ENCODE measurements at regions of chr19 and their contacts with region 1.

Region 1: GRCh38 chr19:5864725-5865486 is 5.4 kb downstream of the FUT5 start:
- DNase-seq: no peak
- H3K4me3 ChIP-seq: no peak overlapping the region
- H3K27ac ChIP-seq: no peak overlapping the region
- H3K4me1 ChIP-seq: no peaks in the 10 kb centered on the region
- H3K27me3 ChIP-seq: peaks cover 0 to 11% (median 0%) of the 10 kb centered on the region in 3 donors
- CTCF ChIP-seq: peak in 2 of 7 experiments; percentile 7 to 13
- EP300 ChIP-seq: no peak
- POLR2A ChIP-seq: no peak

Region 2: DNA sequence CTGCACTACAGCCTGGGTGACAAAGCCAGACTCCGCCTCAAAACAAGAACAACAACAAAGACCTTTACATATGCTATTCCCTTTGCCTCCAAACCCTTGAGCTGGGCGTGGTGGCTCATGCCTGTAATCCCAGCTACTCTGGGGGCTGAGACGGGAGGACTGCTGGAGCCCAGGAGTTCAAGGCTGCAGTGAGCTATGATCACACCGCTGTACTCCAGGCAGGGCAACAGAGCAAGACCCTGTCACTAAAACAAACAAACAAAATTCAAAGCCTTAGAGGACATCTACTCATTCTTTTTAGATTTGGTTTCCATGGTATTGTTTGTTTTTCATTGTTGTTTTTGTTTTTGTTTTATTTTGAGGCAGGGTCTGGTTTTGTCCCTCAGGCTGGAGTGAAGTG is 460.7 kb after region 1 on chr19:
- intact Hi-C with region 1: loop called (anchors 10 kb)
- DNase-seq: no peak
- H3K4me3 ChIP-seq: no peak overlapping the region
- H3K27ac ChIP-seq: no peak overlapping the region
- H3K4me1 ChIP-seq: no peaks in the 10 kb centered on the region
- H3K27me3 ChIP-seq: peaks cover 0 to 17% (median 0%) of the 10 kb centered on the region in 3 donors
- CTCF ChIP-seq: no peak
- EP300 ChIP-seq: no peak
- POLR2A ChIP-seq: no peak

Measured in stomach (tissue), 19 donors.